Activated CD4-positive, alpha-beta T cell treated with anti-CD3 and anti-CD28 coated beads, Interleukin-2, amount 10 ng/mL, durations not matched to agents 24 days and 14 days (primary cell): ENCODE measurements at regions of chr2 and their contacts with region 1.

Region 1: DNA sequence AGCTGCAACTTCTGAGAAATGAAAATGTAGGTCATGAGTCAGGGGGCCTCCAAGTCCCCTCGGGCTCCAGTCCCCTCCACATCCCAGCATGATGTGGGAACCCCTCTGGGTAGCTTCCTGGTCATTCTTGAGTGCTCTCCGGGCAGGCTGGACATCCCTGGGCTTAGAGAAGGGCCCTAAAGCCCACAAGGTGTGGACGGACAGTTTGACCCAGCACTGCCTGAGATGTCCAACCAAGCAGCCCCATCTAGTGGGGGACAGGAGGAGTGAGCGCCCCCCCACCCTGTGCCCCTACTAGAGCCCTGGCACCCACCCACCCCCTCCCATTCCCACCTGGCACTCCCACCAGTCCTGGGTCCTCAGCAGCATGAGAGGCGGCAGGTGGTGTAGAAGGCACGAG is 46.0 kb downstream of the CYP27C1 start:
- DNase-seq: no peak
- H3K4me3 Mint-ChIP-seq: no peak overlapping the region
- H3K27ac Mint-ChIP-seq: no peak overlapping the region
- H3K4me1 Mint-ChIP-seq: no peaks in the 10 kb centered on the region
- H3K27me3 Mint-ChIP-seq: no peaks in the 10 kb centered on the region

Region 2: DNA sequence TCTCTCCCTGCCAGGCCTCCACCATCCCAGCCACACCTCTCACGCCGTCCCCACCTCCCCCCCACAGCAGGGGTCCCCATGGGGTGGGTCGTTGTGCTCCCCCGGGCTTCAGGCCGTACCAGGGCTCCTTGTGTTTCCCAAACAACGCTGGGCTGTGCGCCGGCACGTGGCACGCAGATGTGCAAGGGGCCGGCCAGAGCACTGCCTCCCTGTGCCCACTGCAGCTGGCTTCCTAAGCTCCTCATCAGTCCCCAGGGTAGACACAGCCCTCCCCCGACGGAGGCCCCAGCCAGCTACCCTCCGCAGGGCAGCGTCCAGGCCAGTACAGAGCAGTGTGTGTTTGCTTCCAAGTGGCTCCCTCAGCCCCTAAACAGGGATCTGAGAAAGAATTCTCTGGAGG is 101.2 kb before region 1 on chr2:
- intact Hi-C with region 1: loop called (anchors 10 kb)
- DNase-seq: no peak
- H3K4me3 Mint-ChIP-seq: no peak overlapping the region
- H3K27ac Mint-ChIP-seq: no peak overlapping the region
- H3K4me1 Mint-ChIP-seq: peaks cover 18% of the 10 kb centered on the region
- H3K27me3 Mint-ChIP-seq: no peaks in the 10 kb centered on the region

Region 3: DNA sequence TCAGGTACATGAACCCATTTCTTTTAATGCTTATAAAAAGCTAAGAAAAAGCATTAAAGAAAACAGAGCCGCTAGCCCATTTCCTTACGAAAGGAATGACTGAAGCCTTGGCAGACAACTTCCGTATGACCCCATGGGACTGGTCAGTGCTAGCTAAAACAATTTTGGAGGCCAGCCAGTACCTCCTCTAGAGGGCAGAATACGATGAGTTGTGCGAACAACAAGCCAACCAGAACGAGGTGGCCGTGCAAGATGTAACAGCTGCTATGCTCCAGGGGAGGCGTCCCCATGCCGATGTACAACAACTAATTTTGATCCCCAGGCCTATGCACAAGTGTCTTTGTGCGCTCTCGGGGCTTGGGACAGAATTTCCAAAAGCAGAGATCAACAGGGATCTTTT is 196.9 kb after region 1 on chr2:
- intact Hi-C with region 1: no loop called
- DNase-seq: no peak
- H3K4me3 Mint-ChIP-seq: no peak overlapping the region
- H3K27ac Mint-ChIP-seq: no peak overlapping the region
- H3K4me1 Mint-ChIP-seq: peaks cover 5% of the 10 kb centered on the region
- H3K27me3 Mint-ChIP-seq: no peaks in the 10 kb centered on the region